Activated naive CD4-positive, alpha-beta T cell treated with anti-CD3 and anti-CD28 coated beads for 36 hours (primary cell): ENCODE measurements at regions of chr16 and their contacts with region 1.

Region 1: GRCh38 chr16:90022209-90023064 is 3.2 kb upstream of the DBNDD1 start:
- DNase-seq: peak; percentile 90
- H3K4me3 Mint-ChIP-seq: peak overlapping the region; percentile 72
- H3K27ac Mint-ChIP-seq: no peak overlapping the region
- H3K4me1 Mint-ChIP-seq: peaks cover 20% of the 10 kb centered on the region
- H3K27me3 Mint-ChIP-seq: peaks cover 3% of the 10 kb centered on the region

Region 2: GRCh38 chr16:89873972-89874689 is 148.3 kb before region 1 on chr16:
- CTCF ChIA-PET with region 1: no interaction called
- intact Hi-C with region 1: loop called (anchors 5 kb)
- DNase-seq: peak; percentile 95
- H3K4me3 Mint-ChIP-seq: peak overlapping the region; percentile 91
- H3K27ac Mint-ChIP-seq: peak overlapping the region; percentile 95
- H3K4me1 Mint-ChIP-seq: peaks cover 13% of the 10 kb centered on the region
- H3K27me3 Mint-ChIP-seq: no peaks in the 10 kb centered on the region

Region 3: DNA sequence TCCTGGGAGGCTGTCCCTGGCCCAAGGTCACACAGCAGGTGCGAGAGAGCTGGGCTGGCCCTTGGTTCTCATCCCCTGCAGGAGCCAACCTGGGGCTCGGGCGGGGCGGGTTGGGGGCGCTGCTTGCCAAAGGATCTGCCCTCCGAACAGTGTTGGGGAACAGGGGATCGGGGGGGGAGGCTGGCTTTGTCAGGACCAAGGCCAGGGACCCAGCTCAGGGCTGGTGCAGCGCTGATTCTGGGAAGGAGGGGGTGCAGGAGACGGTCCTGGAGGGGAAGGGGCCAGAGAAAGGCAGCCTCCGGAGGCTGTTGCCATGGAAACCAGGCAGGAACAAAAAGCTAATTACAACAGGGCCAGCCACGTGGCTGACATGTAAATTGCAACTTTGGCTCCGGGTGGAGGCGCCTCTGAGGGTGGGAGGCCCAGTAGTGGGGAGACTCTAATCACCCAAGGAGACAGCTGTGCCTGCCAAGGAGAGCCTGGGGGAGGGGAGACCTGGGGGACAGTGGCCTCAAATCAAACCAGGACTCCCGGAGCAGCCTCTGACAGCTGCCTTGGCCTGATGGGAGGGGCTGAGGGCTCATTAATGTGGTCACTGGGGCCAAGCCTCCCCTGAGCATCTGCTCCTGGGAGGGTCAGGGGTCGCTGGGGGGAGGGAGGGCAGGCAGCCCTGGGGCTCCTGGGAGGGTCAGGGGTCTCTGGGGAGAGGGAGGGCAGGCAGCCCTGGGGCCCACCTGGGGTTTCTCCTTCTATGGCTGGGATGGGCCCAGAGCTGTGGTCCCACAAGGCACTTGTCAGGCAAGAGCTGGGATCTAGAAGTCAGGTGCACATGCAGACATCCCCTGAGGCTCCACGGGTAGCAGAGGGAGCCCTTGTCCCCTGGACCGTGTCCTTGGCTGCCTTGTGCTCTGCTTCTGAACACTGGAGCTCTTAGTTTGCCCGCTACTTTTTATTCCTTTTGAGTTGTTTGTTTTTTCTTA is 97.8 kb before region 1 on chr16:
- CTCF ChIA-PET with region 1: no interaction called
- intact Hi-C with region 1: loop called (anchors 2 kb)
- DNase-seq: peak; percentile 42
- H3K4me3 Mint-ChIP-seq: no peak overlapping the region
- H3K27ac Mint-ChIP-seq: no peak overlapping the region
- H3K4me1 Mint-ChIP-seq: peaks cover 30% of the 10 kb centered on the region
- H3K27me3 Mint-ChIP-seq: peaks cover 47% of the 10 kb centered on the region

Region 4: GRCh38 chr16:89972244-89973234 is 49.9 kb before region 1 on chr16:
- CTCF ChIA-PET with region 1: interaction called, 4 read pairs
- intact Hi-C with region 1: loop called (anchors 1 kb)
- DNase-seq: peak; percentile 89
- H3K4me3 Mint-ChIP-seq: peak overlapping the region; percentile 98
- H3K27ac Mint-ChIP-seq: peak overlapping the region; percentile 93
- H3K4me1 Mint-ChIP-seq: peaks cover 38% of the 10 kb centered on the region
- H3K27me3 Mint-ChIP-seq: no peaks in the 10 kb centered on the region

Region 5: GRCh38 chr16:89999831-90000574 is 22.4 kb before region 1 on chr16:
- CTCF ChIA-PET with region 1: interaction called, 3 read pairs
- intact Hi-C with region 1: loop called (anchors 1 kb)
- DNase-seq: no peak
- H3K4me3 Mint-ChIP-seq: no peak overlapping the region
- H3K27ac Mint-ChIP-seq: no peak overlapping the region
- H3K4me1 Mint-ChIP-seq: peaks cover 8% of the 10 kb centered on the region
- H3K27me3 Mint-ChIP-seq: no peaks in the 10 kb centered on the region

Region 6: GRCh38 chr16:90077226-90077756 is 54.9 kb after region 1 on chr16 and contains the start of gene PRDM7:
- CTCF ChIA-PET with region 1: no interaction called
- intact Hi-C with region 1: loop called (anchors 1 kb)
- DNase-seq: peak; percentile 99
- H3K4me3 Mint-ChIP-seq: peak within 1 kb of the TSS; percentile 79
- H3K27ac Mint-ChIP-seq: peak within 1 kb of the TSS; percentile 68
- H3K4me1 Mint-ChIP-seq: peaks cover 27% of the 10 kb centered on the region
- H3K27me3 Mint-ChIP-seq: peaks cover 12% of the 10 kb centered on the region
- total RNA-seq, gene PRDM7: not detected